ENCODE measurements at regions of chr17 and their contacts with region 1.

Region 1: DNA sequence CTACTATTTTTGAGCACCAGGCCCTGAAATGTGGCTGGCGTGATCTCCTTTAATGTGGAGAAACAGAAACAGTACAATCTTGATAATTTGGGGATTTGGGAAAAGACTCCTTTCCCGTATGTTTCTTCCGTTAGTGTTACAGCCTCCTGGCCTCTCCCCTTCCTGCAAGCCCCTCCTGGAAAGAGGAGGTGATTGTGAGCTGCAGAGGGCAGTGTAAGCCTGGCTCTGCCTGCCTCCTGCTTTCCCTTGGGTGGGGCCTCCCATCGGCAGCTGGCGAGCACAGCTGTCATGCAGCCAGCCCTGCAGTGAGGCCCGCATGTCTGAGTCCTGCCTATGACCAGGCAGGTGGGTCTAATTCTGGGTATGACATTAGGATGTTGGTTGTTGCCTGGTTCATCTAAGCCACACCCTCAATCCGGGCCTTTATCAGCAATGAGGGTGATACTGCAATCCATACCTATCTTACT is 48.7 kb upstream of the WSB1 start:
- DNase-seq: peak; percentile 80
- ATAC-seq: peak; percentile 97
- H3K4me3 ChIP-seq: peak overlapping the region in 2 of 3 experiments; percentile 29 to 41; a peak in 1 of 6 replicates
- H3K27ac ChIP-seq: no peak overlapping the region
- H3K4me1 ChIP-seq: peaks cover 36% of the 10 kb centered on the region
- H3K27me3 ChIP-seq: peaks cover 3 to 11% of the 10 kb centered on the region in 2 experiments; a peak in 3 of 5 replicates
- CTCF ChIP-seq: peak; percentile 97
- EP300 ChIP-seq: no peak
- POLR2A ChIP-seq: no peak
- RAD21 ChIP-seq: peak; percentile 94

Region 2: GRCh38 chr17:27181935-27182334 is 63.3 kb before region 1 on chr17:
- CTCF ChIA-PET with region 1: no interaction called
- POLR2A ChIA-PET with region 1: no interaction called
- in situ Hi-C with region 1: no loop called
- intact Hi-C with region 1: no loop called
- DNase-seq: no peak
- ATAC-seq: no peak
- H3K4me3 ChIP-seq: no peak overlapping the region
- H3K27ac ChIP-seq: no peak overlapping the region
- H3K4me1 ChIP-seq: no peaks in the 10 kb centered on the region
- H3K27me3 ChIP-seq: no peaks in the 10 kb centered on the region
- CTCF ChIP-seq: no peak
- EP300 ChIP-seq: no peak
- POLR2A ChIP-seq: no peak
- RAD21 ChIP-seq: no peak

Region 3: DNA sequence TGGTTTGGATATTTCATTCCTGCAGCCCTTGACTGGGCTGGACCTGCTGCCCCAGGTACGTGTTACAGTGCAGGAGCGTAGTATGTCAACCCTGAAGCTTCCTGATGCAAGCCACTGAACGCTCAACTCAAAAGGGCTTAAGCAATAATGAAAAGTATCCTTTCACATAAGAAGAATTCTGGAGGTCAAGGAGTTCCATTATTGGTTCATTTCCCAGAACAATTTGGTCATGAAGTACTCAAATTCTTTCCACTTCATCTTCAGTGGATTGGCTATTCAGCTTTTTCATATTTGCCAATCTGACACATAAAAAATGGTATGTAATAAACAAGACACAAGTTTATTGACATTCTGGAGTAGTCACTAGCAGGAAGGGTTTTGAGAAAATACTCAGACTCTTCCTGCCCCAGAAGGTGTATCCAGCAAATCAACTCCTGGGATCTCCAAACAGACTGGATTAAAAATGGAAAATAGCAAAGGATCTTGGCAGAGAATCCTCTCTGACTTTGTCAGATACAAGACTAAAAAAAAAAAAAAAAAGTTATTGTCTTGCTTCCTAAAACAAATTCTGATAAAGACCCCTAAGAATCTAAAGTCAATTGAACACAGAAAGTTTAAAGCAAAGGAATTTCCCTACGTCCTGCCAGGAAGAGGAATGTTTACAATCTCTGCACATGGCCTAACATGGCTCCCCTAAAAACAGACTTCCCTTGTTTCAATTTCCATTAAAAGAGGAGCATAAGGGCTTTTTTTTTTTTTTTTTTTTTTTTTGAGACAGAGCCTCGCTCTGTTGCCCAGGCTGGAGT is 11.2 kb after region 1 on chr17:
- CTCF ChIA-PET with region 1: no interaction called
- POLR2A ChIA-PET with region 1: no interaction called
- in situ Hi-C with region 1: no loop called
- intact Hi-C with region 1: loop called (anchors 1 kb)
- DNase-seq: peak; percentile 72
- ATAC-seq: peak; percentile 44; the same call in 2 of the 3 replicates
- H3K4me3 ChIP-seq: peak overlapping the region in 1 of 3 experiments; percentile 6; a peak in 2 of 6 replicates
- H3K27ac ChIP-seq: no peak overlapping the region
- H3K4me1 ChIP-seq: peaks cover 27% of the 10 kb centered on the region
- H3K27me3 ChIP-seq: peaks cover 0 to 2% of the 10 kb centered on the region in 2 experiments; a peak in 1 of 5 replicates
- CTCF ChIP-seq: no peak
- EP300 ChIP-seq: no peak
- POLR2A ChIP-seq: no peak
- RAD21 ChIP-seq: no peak

Region 4: GRCh38 chr17:27265333-27265732 is 20.1 kb after region 1 on chr17:
- CTCF ChIA-PET with region 1: no interaction called
- POLR2A ChIA-PET with region 1: no interaction called
- in situ Hi-C with region 1: no loop called
- intact Hi-C with region 1: loop called (anchors 1 kb)
- DNase-seq: peak; percentile 88
- ATAC-seq: peak; percentile 73
- H3K4me3 ChIP-seq: no peak overlapping the region
- H3K27ac ChIP-seq: no peak overlapping the region
- H3K4me1 ChIP-seq: peaks cover 63% of the 10 kb centered on the region
- H3K27me3 ChIP-seq: no peaks in the 10 kb centered on the region
- CTCF ChIP-seq: no peak
- EP300 ChIP-seq: peak in 1 of 2 experiments; percentile 41; a peak in 1 of 4 replicates
- POLR2A ChIP-seq: no peak
- RAD21 ChIP-seq: no peak

Region 5: DNA sequence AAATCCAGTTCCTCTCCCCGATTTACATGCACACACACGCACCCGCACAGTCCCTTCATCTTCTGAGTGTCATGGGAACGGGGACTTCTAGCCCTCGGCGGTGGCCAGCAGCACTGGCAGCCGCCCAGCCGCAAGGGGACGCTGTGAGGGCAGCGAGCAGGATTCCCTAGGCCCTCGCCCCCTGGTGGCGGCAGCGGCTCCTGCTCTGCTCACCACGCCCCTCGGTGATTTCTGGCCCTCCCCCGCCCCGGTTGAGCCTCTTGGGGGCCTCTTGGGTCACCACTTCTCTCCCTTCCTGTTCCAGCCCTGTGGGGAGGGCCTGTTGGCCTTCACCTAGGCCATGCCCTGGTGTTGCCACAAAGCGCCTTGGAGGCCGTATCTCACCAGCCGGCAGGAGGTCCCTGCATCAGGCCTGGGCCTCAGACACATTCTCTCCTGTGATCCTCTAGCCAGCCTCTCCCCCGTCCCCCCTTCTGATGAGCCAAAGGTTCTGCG is 135.8 kb after region 1 on chr17:
- CTCF ChIA-PET with region 1: interaction called, 19 read pairs
- POLR2A ChIA-PET with region 1: interaction called, 3 read pairs
- in situ Hi-C with region 1: no loop called
- intact Hi-C with region 1: loop called (anchors 2 kb)
- DNase-seq: peak; percentile 75
- ATAC-seq: peak; percentile 96
- H3K4me3 ChIP-seq: peak overlapping the region in 1 of 3 experiments; percentile 51; a peak in 1 of 6 replicates
- H3K27ac ChIP-seq: no peak overlapping the region
- H3K4me1 ChIP-seq: peaks cover 28% of the 10 kb centered on the region
- H3K27me3 ChIP-seq: peaks cover 0 to 6% of the 10 kb centered on the region in 2 experiments; a peak in 2 of 5 replicates
- CTCF ChIP-seq: peak; percentile 99
- EP300 ChIP-seq: peak in 1 of 2 experiments; percentile 18; a peak in 1 of 4 replicates
- POLR2A ChIP-seq: no peak
- RAD21 ChIP-seq: peak; percentile 95

Measured in HepG2 (cell line).